Panc1 (cell line): ENCODE measurements at regions of chr11 and their contacts with region 1.

Region 1: DNA sequence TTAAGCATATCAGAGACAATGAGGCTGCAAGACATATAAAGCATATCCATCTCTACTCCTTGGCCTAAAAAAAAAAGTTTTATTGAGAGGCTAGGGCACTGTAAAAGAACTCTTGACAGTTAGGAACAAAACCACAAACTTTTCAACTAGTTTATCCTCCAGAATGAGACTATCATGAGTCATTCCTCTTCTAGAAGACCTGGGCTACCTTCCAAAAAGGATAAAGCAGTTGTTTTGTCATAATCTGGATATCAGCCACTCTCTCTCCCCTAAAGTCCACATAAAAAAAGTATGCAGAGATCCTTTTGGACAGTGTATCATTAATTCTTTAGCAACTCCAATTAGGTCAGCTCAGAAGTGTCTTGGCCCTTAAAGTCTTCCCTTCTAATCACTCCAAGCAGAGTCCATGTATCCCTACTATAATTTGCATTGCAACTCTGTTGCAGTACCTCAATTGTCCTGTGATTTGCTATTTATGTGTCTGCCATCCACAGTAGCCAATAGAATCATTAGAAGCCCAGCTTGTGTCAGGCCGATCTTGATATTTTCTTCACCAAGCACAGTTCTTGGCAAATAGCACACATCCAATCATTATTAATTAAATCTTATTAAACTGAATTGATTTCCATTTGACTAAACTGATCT is 10.4 kb downstream of the OR51T1 start:
- DNase-seq: peak; percentile 82
- ATAC-seq: peak; percentile 91
- H3K4me3 ChIP-seq: no peak overlapping the region
- H3K27ac ChIP-seq: no peak overlapping the region
- H3K4me1 ChIP-seq: no peaks in the 10 kb centered on the region
- H3K27me3 ChIP-seq: no peaks in the 10 kb centered on the region
- CTCF ChIP-seq: peak; percentile 7; the same call in 1 of the 2 replicates

Region 2: GRCh38 chr11:4821021-4821420 is 71.1 kb before region 1 on chr11 and contains the start of gene OR51F2:
- CTCF ChIA-PET with region 1: no interaction called
- POLR2A ChIA-PET with region 1: no interaction called
- in situ Hi-C with region 1: no loop called
- intact Hi-C with region 1: no loop called
- DNase-seq: no peak
- ATAC-seq: no peak
- H3K4me3 ChIP-seq: no peak within 1 kb of the TSS
- H3K27ac ChIP-seq: no peak within 1 kb of the TSS
- H3K4me1 ChIP-seq: no peaks in the 10 kb centered on the region
- H3K27me3 ChIP-seq: no peaks in the 10 kb centered on the region
- CTCF ChIP-seq: no peak
- total RNA-seq, gene OR51F2: not detected

Region 3: DNA sequence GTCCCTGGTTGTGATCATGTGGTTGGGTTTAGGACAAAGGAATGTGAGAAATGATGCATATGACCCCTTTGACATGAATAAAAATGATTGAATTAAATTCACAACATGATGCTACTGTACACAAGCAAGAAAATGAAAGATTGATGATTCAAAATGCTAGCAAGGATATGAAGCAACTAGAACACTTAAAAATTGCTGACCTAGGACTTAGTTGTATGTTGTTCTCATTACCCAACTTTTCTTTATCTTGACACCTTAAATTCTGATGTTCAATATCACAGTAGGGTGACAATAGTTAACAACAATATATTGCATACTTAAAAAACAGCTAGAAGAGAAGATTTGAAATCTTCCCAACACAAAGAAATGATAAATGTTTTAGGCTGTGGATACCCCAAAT is 225.5 kb after region 1 on chr11:
- CTCF ChIA-PET with region 1: no interaction called
- POLR2A ChIA-PET with region 1: interaction called, 11 read pairs
- in situ Hi-C with region 1: no loop called
- intact Hi-C with region 1: no loop called
- DNase-seq: no peak
- ATAC-seq: no peak
- H3K4me3 ChIP-seq: no peak overlapping the region
- H3K27ac ChIP-seq: no peak overlapping the region
- H3K4me1 ChIP-seq: no peaks in the 10 kb centered on the region
- H3K27me3 ChIP-seq: no peaks in the 10 kb centered on the region
- CTCF ChIP-seq: no peak